ENCODE measurements at regions of chr1 and their contacts with region 1.

Region 1: DNA sequence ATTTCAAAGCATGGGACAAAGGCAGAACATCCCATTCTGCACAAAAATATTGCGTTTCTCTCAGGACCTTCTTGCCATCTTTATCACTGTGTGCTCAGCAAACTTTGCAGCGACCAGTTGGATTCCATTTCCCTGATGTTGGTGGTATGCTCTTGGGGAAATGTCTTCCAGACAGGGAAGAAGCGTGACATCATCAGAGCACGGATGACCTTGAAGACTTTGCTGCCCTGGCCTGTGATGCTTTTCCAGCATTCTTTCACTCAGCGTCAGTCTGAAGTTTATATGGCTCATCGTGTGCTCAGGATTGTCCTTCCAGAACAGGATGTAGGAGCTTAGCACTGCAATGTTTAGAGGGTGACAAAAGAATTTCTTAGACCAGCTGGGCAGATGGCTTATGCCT is 131.4 kb upstream of the F3 start:
- DNase-seq: no peak
- ATAC-seq: no peak
- H3K4me3 ChIP-seq: no peak overlapping the region
- H3K27ac ChIP-seq: no peak overlapping the region
- H3K4me1 ChIP-seq: no peaks in the 10 kb centered on the region
- H3K27me3 ChIP-seq: no peaks in the 10 kb centered on the region
- CTCF ChIP-seq: no peak

Region 2: DNA sequence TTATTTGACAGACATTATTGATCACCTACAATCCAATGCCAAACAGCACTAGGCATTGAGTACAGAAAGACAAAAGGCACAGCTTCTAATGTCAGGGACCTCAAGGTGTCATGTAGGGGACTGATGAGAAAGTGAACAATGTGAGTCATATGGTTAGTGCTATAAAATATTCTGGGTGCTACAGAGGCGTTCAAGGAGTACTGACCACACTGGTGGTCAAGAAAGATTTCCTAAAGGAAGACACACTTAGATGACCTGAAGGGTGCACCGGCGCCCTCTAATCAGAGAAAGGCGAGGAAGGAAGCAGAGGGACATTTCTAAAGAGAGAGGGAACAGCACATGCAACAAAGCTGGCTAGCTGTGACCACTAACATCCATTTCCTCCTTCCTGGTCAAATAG is 66.5 kb before region 1 on chr1:
- intact Hi-C with region 1: loop called in 1 of 10 experiments (anchors 2 kb)
- DNase-seq: no peak
- ATAC-seq: no peak
- H3K4me3 ChIP-seq: no peak overlapping the region
- H3K27ac ChIP-seq: no peak overlapping the region
- H3K4me1 ChIP-seq: peaks cover 0 to 15% (median 0%) of the 10 kb centered on the region in 9 donors
- H3K27me3 ChIP-seq: peaks cover 0 to 17% (median 0%) of the 10 kb centered on the region in 7 donors
- CTCF ChIP-seq: no peak

Measured in heart right ventricle (tissue), 16 donors.